ENCODE measurements at regions of chr5 and their contacts with region 1.

Region 1: DNA sequence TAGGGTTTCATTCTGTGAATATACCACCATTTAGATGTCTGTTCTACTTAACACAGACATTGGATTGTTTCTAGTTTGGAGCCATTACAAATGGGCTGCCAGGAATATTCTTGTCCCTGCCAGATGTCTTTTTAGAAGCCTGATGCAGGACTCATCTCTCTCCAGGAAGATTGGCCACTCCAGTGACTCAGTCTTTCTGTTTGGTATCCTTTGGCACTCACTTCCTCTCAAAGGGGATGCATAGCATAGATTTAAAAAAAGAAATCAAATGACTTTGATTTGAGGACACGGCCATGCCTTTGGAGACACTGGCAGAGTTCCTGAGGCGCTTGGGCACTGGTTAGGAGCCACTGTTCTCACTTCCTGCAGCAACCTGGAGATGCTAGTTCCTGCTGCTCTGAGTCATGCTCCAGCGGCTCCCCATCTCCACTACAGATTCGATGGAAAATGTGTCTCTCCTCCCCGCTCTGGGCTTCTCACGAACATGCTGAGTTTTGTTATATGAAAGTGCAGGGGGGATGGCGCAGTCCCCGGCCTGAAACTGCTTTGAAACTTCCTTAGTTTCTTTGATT is 3.5 kb upstream of the ZNF366 start:
- DNase-seq: peak; percentile 42 to 76
- H3K4me3 ChIP-seq: no peak overlapping the region
- H3K27ac ChIP-seq: peak overlapping the region; percentile 63 to 67
- H3K4me1 ChIP-seq: peaks cover 0 to 42% (median 19%) of the 10 kb centered on the region in 4 donors
- H3K27me3 ChIP-seq: no peaks in the 10 kb centered on the region
- CTCF ChIP-seq: no peak

Region 2: DNA sequence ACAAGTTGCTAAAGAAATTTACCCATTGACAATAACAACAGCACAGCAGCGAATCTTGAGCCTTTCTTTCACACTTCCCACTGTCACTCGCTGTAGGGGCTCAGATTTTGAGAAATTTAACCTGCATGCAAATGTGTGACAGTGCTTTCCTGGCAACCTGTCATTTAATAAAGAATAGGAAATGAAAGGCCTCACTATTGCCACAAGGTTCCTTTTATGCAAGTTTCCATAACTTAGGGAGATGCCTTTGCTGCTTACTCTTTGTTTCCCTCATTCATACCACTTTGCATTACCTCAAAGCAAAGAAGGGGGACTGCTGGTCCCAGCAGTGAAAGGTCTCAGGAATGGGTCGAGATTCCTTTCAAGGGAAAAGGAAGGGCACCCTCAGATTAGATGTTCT is 141.0 kb before region 1 on chr5:
- intact Hi-C with region 1: loop called (anchors 5 kb)
- DNase-seq: no peak
- H3K4me3 ChIP-seq: no peak overlapping the region
- H3K27ac ChIP-seq: peak overlapping the region in 1 of 2 donors; percentile 21
- H3K4me1 ChIP-seq: peaks cover 0 to 36% (median 9%) of the 10 kb centered on the region in 4 donors
- H3K27me3 ChIP-seq: no peaks in the 10 kb centered on the region
- CTCF ChIP-seq: no peak

Region 3: GRCh38 chr5:72441861-72442540 is 68.7 kb before region 1 on chr5:
- intact Hi-C with region 1: loop called (anchors 5 kb)
- DNase-seq: no peak
- H3K4me3 ChIP-seq: no peak overlapping the region
- H3K27ac ChIP-seq: peak overlapping the region; percentile 88 to 91
- H3K4me1 ChIP-seq: peaks cover 0 to 81% (median 46%) of the 10 kb centered on the region in 4 donors
- H3K27me3 ChIP-seq: no peaks in the 10 kb centered on the region
- CTCF ChIP-seq: no peak

Measured in tibial artery (tissue), 4 donors.